Cardiac septum (tissue), 1 donor: ENCODE measurements at regions of chr12 and their contacts with region 1.

Region 1: GRCh38 chr12:15590180-15590826 is 198.9 kb downstream of the EPS8 start:
- DNase-seq: no peak

Region 2: DNA sequence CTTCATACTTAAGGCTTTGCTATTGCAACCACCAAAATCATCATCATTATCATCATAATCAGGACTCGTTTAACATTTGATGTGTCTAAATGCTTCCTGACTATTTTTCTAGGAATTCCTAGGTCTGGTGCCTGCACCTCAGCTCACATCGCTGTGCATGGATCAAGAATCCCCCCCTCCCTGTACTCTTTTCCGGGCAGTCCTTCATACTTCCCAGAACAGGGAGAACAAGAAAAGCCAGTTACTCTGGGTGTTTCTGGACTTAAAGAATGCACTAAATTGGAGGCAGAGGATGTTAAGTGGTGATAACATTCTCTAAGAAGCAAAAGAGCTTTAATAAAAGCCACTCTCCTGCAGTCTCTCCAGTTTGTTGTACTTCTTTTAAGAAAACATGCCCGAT is 661.3 kb before region 1 on chr12:
- intact Hi-C with region 1: no loop called
- DNase-seq: no peak

Region 3: GRCh38 chr12:15629108-15629507 is 38.8 kb after region 1 on chr12:
- intact Hi-C with region 1: loop called (anchors 5 kb)
- DNase-seq: no peak

Region 4: DNA sequence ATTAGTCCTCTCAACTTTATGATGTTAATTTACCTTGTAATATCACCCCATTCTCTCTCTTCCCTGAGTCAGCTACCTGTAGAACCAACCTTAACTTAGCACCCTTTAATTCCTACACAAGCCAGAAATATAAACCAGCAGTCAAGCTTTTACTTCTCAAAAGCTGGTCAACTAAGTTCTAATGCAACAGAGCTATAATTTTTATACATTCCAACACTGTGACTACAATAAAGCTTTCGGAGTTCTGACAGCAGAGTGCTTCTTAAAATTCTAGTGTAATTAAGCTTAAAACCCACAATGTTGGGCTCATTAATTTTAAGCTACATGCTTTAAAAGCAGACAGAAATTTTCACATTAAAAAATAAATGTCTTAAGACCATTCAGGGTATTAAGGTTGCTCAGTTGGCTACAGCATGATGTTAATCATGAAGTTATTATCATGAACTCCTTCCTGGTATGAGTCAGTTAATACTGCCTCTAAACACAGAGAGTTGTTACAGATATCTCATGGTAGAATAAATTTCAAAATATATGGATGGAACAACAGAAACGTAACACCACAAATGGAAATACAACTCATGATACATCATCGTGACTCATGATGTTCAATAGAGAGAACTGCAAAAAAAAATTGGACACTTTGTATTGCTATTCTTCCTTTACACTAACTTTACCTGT is 72.1 kb after region 1 on chr12:
- intact Hi-C with region 1: no loop called
- DNase-seq: no peak

Region 5: DNA sequence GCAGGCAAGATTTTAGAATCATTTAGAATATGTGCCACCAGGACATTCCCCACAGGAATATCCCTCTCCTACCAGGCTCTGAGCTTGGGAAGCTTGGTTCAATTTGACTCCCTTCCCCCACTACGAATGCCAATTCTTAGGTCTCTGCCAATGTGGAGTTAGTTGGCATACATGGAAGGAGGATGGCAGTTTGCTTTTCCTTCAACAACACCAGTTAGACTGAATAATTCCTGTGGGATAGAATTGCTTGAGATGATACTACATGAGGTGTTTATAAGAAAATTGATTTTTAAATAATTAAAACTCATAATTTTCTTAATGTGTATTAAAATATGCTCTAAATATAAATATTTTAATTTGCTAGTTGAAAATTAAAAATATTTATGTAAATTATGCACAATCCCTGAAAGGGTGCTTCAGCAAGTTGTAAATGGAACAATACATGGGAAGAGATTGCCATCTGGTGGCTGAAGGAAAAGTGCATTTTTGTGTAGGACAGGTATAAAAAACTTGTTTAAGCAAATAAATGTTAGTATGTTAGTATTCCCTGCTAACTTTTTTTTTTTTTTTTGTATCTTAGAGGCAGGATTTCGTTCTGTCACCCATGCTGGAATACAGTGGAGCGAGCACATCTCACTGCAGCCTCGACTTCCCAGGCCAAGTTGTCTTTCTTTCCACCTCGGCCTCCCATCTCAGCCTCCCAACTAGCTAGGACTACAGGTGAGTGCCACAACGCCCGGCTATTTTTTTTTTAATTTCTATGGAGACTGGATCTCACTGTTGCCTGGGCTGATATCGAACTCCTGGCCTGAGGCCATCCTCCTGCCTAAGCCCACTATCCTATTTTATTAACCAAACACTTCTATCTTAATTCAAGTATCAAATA is 266.0 kb after region 1 on chr12:
- intact Hi-C with region 1: loop called (anchors 1 kb)
- DNase-seq: no peak

Region 6: DNA sequence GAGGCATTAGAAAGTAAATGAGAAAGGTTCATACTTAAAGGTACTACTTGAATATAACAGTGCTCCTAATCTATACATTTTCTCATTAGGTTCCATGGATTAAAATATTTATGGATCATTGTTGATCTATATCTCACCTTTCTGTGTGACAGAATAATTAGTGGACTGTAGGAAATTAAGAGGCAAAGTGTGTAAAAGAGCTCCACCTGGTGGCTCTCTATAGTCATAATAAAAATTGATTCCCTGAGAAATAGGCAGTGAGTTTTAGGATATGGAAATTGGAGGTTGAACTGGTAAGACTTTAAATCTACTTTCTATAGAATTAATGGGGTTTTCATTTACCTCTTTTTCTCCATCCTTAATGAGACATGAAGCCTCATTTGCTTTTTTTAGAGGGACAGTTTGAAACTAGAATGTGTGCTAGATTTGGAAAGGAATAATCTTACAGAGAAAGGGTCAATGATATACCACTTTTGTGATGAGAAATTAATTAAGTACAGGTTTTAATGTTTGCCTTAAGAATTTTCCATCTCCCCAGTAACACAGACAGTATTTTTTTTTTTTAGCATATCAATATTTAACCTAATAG is 309.1 kb after region 1 on chr12:
- intact Hi-C with region 1: loop called (anchors 2 kb)
- DNase-seq: no peak